ENCODE measurements at regions of chr9 and their contacts with region 1.

Region 1: DNA sequence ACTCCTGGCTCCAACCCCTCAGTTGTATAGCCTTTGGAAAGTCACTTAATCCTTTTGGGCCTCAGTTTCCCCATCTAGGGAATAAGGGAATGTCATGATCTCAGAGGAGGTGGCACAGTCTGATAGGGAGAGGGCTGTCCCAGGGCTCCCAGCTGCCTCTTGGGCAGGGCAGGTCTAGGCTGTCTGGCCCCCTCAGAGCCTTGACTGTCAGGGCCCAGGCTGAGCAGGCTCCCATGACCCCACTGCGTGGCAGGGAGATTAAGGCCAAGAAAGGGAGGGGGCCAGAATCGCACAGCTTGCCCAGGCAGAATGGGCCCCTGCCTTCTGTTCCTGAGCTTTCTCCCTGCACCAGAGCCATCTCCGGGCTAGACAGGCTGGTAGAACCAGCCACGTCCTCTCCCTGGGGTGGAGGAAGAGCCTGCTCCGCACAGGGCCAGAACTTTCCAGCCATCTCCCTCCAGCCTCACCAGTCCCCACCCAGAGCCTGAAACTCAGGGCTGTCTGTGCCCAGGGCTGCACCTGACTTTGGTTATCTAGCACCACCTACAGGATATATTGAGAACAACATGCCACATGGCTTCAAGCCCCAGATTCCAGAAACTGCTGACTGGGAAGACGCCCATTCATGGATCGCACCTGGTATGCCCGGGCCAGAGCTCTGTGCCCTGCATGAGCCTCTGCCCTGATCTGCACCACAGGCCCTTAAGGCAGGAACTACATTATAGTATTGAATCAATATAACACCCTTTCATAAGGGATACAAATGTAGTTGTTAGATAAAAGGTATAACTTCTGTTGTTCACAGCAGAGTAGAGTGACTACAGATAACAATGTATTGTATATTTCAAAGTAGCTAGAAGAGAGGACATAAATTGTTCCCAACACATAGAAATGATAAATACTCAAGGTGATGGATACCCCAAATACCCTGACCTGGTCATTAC is 32.0 kb downstream of the NAIF1 start:
- DNase-seq: peak; percentile 33 to 86 (median 78)
- ATAC-seq: peak; percentile 82
- H3K4me3 ChIP-seq: peak overlapping the region; percentile 18
- H3K4me3 Mint-ChIP-seq: peak overlapping the region; percentile 44 to 70 (median 60)
- H3K27ac ChIP-seq: peak overlapping the region; percentile 63
- H3K27ac Mint-ChIP-seq: peak overlapping the region; percentile 70 to 96 (median 90)
- H3K4me1 ChIP-seq: peaks cover 40 to 44% of the 10 kb centered on the region in 2 donors
- H3K4me1 Mint-ChIP-seq: peaks cover 8 to 45% (median 37%) of the 10 kb centered on the region in 7 donors
- H3K27me3 ChIP-seq: no peaks in the 10 kb centered on the region
- H3K27me3 Mint-ChIP-seq: no peaks in the 10 kb centered on the region

Region 2: DNA sequence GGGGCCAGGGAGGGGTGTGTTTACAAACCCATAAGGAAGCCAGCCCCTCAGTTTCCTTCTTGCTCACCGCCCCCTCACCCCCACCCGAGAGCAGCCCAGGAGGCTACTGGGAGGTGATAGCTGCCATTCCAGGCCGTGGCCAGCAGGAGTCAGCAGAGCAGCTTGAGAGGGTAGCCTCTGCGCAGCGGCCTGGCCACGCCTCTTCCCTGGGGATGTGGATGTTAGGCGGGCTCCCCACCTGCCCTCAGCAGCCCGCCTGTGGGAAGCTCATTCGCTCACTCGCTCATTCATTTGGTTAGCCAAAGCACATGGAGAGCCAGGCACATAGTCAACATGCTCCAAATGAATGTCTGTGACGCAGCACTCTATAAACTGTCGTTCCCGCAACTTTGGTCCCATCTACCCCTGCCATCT is 91.4 kb before region 1 on chr9:
- CTCF ChIA-PET with region 1: interaction called, 110 read pairs
- POLR2A ChIA-PET with region 1: interaction called, 62 read pairs
- intact Hi-C with region 1: loop called (anchors 1 kb)
- DNase-seq: peak; percentile 57 to 79 (median 72)
- ATAC-seq: peak; percentile 90
- H3K4me3 ChIP-seq: no peak overlapping the region
- H3K4me3 Mint-ChIP-seq: peak overlapping the region in 5 of 10 donors; percentile 7 to 47 (median 25)
- H3K27ac ChIP-seq: peak overlapping the region; percentile 22
- H3K27ac Mint-ChIP-seq: peak overlapping the region; percentile 70 to 97 (median 88)
- H3K4me1 ChIP-seq: peaks cover 4 to 12% of the 10 kb centered on the region in 2 donors
- H3K4me1 Mint-ChIP-seq: peaks cover 21 to 58% (median 42%) of the 10 kb centered on the region in 7 donors
- H3K27me3 ChIP-seq: no peaks in the 10 kb centered on the region
- H3K27me3 Mint-ChIP-seq: no peaks in the 10 kb centered on the region

Region 3: DNA sequence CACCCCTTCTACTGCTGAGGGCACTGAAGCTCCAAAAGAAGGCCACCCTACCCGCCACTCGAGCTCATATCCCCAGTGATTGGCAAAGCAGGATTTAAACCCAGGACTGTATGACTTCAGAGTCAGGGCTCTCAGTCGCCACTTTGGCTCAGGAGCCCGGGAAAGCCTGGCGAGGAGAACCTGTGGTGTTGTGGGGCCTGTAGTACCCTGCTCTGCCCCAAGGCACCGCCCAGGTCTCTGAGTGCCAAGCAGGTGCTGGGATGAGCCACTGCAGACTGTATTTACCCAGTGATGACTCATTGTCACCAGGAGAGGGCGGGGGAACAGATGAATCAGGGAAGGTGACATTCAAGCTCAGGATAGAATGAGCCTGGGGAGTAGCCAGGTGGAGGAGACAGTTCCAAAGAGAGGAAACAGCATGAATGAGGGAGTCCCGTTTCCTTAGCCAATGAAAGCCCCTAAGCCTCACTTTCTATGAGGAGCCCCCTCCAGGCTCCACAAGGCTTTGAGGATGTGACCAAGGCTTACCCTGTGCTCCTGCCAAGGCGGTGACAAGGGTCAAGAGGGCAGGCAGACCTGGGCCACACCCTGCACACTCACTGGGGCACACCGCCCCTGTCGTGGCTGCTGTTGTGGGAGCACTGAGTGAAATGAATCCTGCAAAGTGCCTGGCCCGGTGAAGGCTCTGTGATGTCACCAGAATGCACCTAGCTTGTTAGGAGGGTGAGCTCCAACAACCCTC is 79.6 kb before region 1 on chr9:
- CTCF ChIA-PET with region 1: interaction called, 253 read pairs
- POLR2A ChIA-PET with region 1: interaction called, 1,511 read pairs
- intact Hi-C with region 1: loop called (anchors 1 kb)
- DNase-seq: peak in 8 of 9 donors; percentile 64 to 86 (median 70)
- ATAC-seq: peak; percentile 93
- H3K4me3 ChIP-seq: peak overlapping the region; percentile 41
- H3K4me3 Mint-ChIP-seq: peak overlapping the region; percentile 74 to 92 (median 82)
- H3K27ac ChIP-seq: peak overlapping the region; percentile 84
- H3K27ac Mint-ChIP-seq: peak overlapping the region; percentile 66 to 98 (median 93)
- H3K4me1 ChIP-seq: peaks cover 72 to 91% of the 10 kb centered on the region in 2 donors
- H3K4me1 Mint-ChIP-seq: peaks cover 65 to 96% (median 84%) of the 10 kb centered on the region in 7 donors
- H3K27me3 ChIP-seq: no peaks in the 10 kb centered on the region
- H3K27me3 Mint-ChIP-seq: no peaks in the 10 kb centered on the region

Region 4: GRCh38 chr9:127980706-127981558 is 54.2 kb before region 1 on chr9 and contains the start of gene EEIG1:
- CTCF ChIA-PET with region 1: interaction called, 262 read pairs
- POLR2A ChIA-PET with region 1: interaction called, 1,511 read pairs
- intact Hi-C with region 1: loop called (anchors 1 kb)
- DNase-seq: peak; percentile 95 to 100 (median 99)
- ATAC-seq: peak; percentile 96
- H3K4me3 ChIP-seq: peak within 1 kb of the TSS; percentile 93
- H3K4me3 Mint-ChIP-seq: peak within 1 kb of the TSS; percentile 93 to 99 (median 98)
- H3K27ac ChIP-seq: peak within 1 kb of the TSS; percentile 84
- H3K27ac Mint-ChIP-seq: peak within 1 kb of the TSS; percentile 92 to 100 (median 98)
- H3K4me1 ChIP-seq: peaks cover 25 to 38% of the 10 kb centered on the region in 2 donors
- H3K4me1 Mint-ChIP-seq: peaks cover 35 to 47% (median 42%) of the 10 kb centered on the region in 7 donors
- H3K27me3 ChIP-seq: no peaks in the 10 kb centered on the region
- H3K27me3 Mint-ChIP-seq: no peaks in the 10 kb centered on the region
- total RNA-seq, gene EEIG1: 252 to 664 (median 347) TPM

Region 5: GRCh38 chr9:128007566-128008138 is 27.4 kb before region 1 on chr9:
- CTCF ChIA-PET with region 1: interaction called, 14 read pairs
- POLR2A ChIA-PET with region 1: interaction called, 508 read pairs
- intact Hi-C with region 1: loop called (anchors 1 kb)
- DNase-seq: peak; percentile 61 to 97 (median 96)
- ATAC-seq: peak; percentile 95
- H3K4me3 ChIP-seq: peak overlapping the region; percentile 48
- H3K4me3 Mint-ChIP-seq: peak overlapping the region; percentile 76 to 87 (median 86)
- H3K27ac ChIP-seq: peak overlapping the region; percentile 66
- H3K27ac Mint-ChIP-seq: peak overlapping the region; percentile 93 to 100 (median 98)
- H3K4me1 ChIP-seq: peaks cover 39 to 76% of the 10 kb centered on the region in 2 donors
- H3K4me1 Mint-ChIP-seq: peaks cover 28 to 93% (median 65%) of the 10 kb centered on the region in 7 donors
- H3K27me3 ChIP-seq: no peaks in the 10 kb centered on the region
- H3K27me3 Mint-ChIP-seq: peaks cover 0 to 3% (median 0%) of the 10 kb centered on the region in 5 donors

Region 6: GRCh38 chr9:128088253-128088945 is 53.3 kb after region 1 on chr9:
- CTCF ChIA-PET with region 1: interaction called, 6 read pairs
- POLR2A ChIA-PET with region 1: interaction called, 5 read pairs
- intact Hi-C with region 1: loop called in 1 of 2 experiments (anchors 2 kb)
- DNase-seq: peak in 3 of 9 donors; percentile 26 to 51 (median 36)
- ATAC-seq: peak; percentile 55
- H3K4me3 ChIP-seq: no peak overlapping the region
- H3K4me3 Mint-ChIP-seq: peak overlapping the region; percentile 20 to 80 (median 56)
- H3K27ac ChIP-seq: peak overlapping the region; percentile 53
- H3K27ac Mint-ChIP-seq: peak overlapping the region; percentile 41 to 97 (median 83)
- H3K4me1 ChIP-seq: peaks cover 16 to 52% of the 10 kb centered on the region in 2 donors
- H3K4me1 Mint-ChIP-seq: peaks cover 53 to 75% (median 61%) of the 10 kb centered on the region in 7 donors
- H3K27me3 ChIP-seq: no peaks in the 10 kb centered on the region
- H3K27me3 Mint-ChIP-seq: no peaks in the 10 kb centered on the region

Measured in naive thymus-derived CD4-positive, alpha-beta T cell (primary cell).